GM12878 (cell line): ENCODE measurements at regions of chr13 and their contacts with region 1.

Region 1: DNA sequence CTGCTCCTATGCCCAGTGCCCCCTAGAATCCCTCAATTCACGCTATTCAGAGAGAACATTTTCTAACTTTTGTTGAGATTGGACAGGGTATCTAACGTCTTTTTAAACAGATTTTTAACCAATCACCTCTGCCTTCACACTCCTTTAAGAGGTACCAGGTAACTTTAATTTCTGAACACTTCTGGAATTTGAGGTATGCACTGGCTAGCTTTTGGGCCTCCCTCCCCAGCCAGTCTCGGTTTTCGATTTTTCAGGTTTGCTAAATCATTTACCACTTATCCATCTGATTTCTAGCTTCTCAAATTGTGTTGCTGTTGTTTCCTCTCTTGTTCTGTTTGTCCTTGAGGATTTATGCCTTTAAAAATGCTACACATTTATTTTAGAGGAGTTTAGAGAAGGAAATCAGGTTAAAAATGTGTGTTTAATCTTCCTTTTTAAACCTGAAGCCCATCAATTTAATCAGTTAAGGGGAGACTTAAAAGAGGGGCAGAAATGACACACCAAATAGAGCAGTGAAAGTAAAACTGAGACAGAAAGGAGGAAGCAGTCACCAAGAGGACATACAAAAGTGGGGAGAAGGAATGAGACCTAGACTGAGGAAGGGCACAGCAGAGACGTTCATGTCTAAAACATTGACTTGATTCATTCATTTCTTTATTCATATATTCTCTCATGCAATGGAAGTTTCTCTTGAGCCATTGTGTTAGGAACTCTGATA is 139.6 kb upstream of the HTR2A start:
- DNase-seq: peak; percentile 64
- ATAC-seq: peak; percentile 100
- H3K4me3 ChIP-seq: no peak overlapping the region; the same call in 1 of the 2 replicates
- H3K27ac ChIP-seq: peak overlapping the region; percentile 55
- H3K4me1 ChIP-seq: peaks cover 10% of the 10 kb centered on the region; the same call in 1 of the 2 replicates
- H3K27me3 ChIP-seq: no peaks in the 10 kb centered on the region
- CTCF ChIP-seq: no peak
- EP300 ChIP-seq: peak in 1 of 2 experiments; percentile 48; a peak in 1 of 4 replicates
- POLR2A ChIP-seq: no peak
- RAD21 ChIP-seq: no peak

Region 2: GRCh38 chr13:46995874-46996273 is 40.6 kb before region 1 on chr13:
- CTCF ChIA-PET with region 1: no interaction called
- POLR2A ChIA-PET with region 1: no interaction called
- RAD21 ChIA-PET with region 1: no interaction called
- SMC1A ChIA-PET with region 1: interaction called, 3 read pairs
- in situ Hi-C with region 1: no loop called
- intact Hi-C with region 1: loop called (anchors 1 kb)
- DNase-seq: peak; percentile 53
- ATAC-seq: peak; percentile 90
- H3K4me3 ChIP-seq: no peak overlapping the region
- H3K27ac ChIP-seq: no peak overlapping the region; the same call in 1 of the 2 replicates
- H3K4me1 ChIP-seq: peaks cover 17% of the 10 kb centered on the region
- H3K27me3 ChIP-seq: no peaks in the 10 kb centered on the region
- CTCF ChIP-seq: no peak
- EP300 ChIP-seq: no peak
- POLR2A ChIP-seq: no peak
- RAD21 ChIP-seq: no peak

Region 3: DNA sequence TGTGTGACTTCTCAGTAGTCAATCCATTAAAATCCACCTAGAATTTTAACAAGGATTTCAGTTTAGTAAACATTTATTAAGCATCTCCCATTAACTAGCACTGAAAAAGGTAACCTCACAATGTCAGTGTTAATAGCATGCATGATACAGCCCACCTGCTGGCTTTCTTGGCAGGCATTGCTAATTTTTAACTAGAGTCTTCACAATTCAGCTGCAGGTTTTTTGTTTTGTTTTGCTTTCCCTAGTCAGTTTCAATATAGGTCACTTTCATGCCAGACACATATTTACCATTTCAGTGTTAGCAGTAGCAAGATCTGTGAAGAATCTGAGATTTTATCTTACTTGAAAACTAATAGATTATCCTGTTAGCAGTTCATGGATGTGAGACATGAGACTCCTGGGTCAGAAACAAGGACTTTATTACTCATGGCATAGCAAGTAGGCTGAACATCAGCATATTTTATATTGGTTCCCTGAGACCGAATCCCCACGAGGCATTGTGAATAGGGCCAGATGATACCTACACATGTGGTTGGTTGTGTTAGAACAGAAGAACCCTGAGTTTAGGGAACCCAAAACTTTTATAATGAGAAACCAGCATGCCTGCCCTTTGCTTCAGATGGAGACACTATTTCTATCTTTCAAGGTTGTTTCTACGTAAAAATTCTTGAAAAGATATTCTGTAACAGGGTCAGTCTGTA is 58.4 kb after region 1 on chr13:
- CTCF ChIA-PET with region 1: no interaction called
- POLR2A ChIA-PET with region 1: no interaction called
- RAD21 ChIA-PET with region 1: no interaction called
- SMC1A ChIA-PET with region 1: no interaction called
- in situ Hi-C with region 1: no loop called
- intact Hi-C with region 1: loop called (anchors 2 kb)
- DNase-seq: peak; percentile 48
- ATAC-seq: peak; percentile 91
- H3K4me3 ChIP-seq: no peak overlapping the region
- H3K27ac ChIP-seq: no peak overlapping the region
- H3K4me1 ChIP-seq: peaks cover 6% of the 10 kb centered on the region; the same call in 1 of the 2 replicates
- H3K27me3 ChIP-seq: no peaks in the 10 kb centered on the region
- CTCF ChIP-seq: no peak
- EP300 ChIP-seq: 0 out of 4 replicates have a peak, but pooled peaks of 1 of the 2 experiments have one; percentile 35
- POLR2A ChIP-seq: no peak
- RAD21 ChIP-seq: no peak

Region 4: DNA sequence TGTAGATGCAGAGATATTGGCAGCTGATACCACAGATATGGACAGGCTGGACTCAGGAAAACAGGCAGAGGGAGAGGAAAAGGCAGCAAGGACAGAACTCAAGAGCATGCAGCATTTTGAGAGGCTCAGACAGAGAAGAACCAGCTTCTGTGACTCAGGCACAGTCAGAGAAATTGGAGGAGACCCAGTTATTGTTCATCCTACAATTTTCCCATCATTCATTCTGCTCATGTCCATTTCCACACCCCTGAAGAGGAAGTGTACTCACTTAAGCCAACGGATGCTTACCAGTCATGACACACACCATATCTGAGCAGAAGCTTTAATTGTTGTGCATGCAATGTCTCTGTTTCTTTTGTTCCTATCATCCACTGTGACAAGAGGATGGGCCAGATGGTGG is 220.2 kb after region 1 on chr13:
- CTCF ChIA-PET with region 1: no interaction called
- POLR2A ChIA-PET with region 1: no interaction called
- RAD21 ChIA-PET with region 1: no interaction called
- SMC1A ChIA-PET with region 1: no interaction called
- in situ Hi-C with region 1: no loop called
- intact Hi-C with region 1: no loop called
- DNase-seq: no peak
- ATAC-seq: no peak
- H3K4me3 ChIP-seq: no peak overlapping the region
- H3K27ac ChIP-seq: no peak overlapping the region
- H3K4me1 ChIP-seq: no peaks in the 10 kb centered on the region
- H3K27me3 ChIP-seq: no peaks in the 10 kb centered on the region
- CTCF ChIP-seq: no peak
- EP300 ChIP-seq: no peak
- POLR2A ChIP-seq: no peak
- RAD21 ChIP-seq: no peak